Sigmoid colon (tissue), 7 donors: ENCODE measurements at regions of chr5 and their contacts with region 1.

Region 1: DNA sequence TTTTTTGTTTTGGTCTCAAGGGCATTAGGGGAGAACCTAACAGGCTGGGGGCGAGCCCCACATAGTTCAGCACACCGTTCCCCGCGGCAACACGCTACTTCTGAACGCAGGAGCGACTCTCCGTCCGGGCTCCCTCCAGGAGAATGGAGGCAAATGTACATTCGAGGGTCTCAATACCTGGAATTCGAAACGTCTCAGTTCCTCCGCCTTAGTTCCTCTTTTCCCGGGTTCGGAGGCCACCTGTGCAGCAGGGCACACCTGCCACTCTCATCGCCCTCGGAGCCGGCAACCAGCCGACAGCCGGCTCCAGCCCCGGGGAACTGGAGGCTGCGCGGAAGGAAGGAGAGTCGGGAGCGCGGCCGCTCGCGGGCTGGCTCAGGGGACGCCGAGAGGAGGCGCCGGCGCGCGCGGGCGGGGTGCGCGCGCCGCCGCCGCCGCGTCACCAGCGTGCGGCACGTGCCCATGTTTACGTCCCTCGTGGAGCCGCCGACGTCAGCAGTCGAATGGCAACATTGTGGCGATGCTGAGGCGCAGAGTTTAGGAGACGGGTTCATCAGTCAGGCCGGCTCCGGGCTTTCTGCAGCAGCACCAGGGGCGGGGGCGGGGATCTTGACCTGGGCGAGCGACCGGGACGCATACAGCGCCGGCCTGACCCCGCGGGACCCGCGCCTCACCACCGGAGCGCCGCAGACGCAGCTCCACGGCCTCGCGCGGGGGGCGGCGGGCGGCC is at the start of gene JMY:
- DNase-seq: peak; percentile 94
- H3K4me3 ChIP-seq: peak within 1 kb of the TSS; percentile 65 to 85 (median 74)
- H3K27ac ChIP-seq: peak within 1 kb of the TSS; percentile 85 to 96 (median 93)
- H3K4me1 ChIP-seq: peaks cover 0 to 37% (median 20%) of the 10 kb centered on the region in 4 donors
- H3K27me3 ChIP-seq: no peaks in the 10 kb centered on the region
- CTCF ChIP-seq: no peak
- EP300 ChIP-seq: peak in 2 of 4 donors; percentile 6 to 32
- POLR2A ChIP-seq: peak; percentile 21 to 42
- total RNA-seq, gene JMY: 33.2 to 58.7 (median 39.2) TPM

Region 2: DNA sequence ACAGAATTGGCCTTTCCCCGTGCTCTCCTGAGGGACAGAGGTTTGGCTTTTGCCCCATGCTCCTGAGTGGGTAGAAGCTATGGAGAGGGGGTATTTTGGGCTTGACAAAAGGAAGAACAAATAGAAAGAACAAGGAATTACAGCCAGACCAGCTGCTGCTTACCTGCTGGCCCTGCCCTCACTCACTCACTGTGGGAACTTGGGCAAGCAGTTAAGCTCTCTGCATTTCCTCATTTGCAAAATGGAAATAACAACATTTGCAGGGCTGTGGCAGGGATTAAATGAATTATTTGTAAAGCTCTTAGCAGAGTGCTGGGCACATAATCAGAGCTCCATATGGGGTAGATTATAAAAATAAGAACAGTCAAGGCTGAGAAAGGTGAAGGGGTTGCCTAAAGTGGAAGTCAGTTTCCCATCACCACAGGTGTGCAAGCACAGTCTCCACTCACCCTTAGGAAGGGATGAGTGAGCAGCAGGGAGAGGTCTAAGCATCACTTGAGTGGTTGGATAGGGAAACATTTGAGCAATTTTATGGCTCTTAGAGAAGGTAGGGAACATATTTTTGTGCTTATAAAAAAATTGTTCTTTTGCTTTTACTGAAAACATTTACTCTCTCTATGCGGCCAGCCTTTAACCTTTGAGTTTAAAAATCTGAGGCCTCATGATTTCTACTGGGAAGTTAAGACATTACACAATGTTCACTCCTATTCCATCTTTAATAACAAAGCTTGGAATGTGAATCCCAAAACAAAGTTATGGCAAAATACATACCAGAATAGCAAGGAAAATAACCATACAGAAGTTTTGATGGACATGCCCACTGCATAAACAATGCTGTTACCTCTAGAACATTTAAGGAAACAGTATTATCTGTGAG is 544.5 kb before region 1 on chr5:
- intact Hi-C with region 1: no loop called
- DNase-seq: no peak
- H3K4me3 ChIP-seq: no peak overlapping the region
- H3K27ac ChIP-seq: no peak overlapping the region
- H3K4me1 ChIP-seq: no peaks in the 10 kb centered on the region
- H3K27me3 ChIP-seq: no peaks in the 10 kb centered on the region
- CTCF ChIP-seq: no peak
- EP300 ChIP-seq: no peak
- POLR2A ChIP-seq: no peak

Region 3: GRCh38 chr5:79020861-79021561 is 214.8 kb before region 1 on chr5:
- intact Hi-C with region 1: loop called (anchors 5 kb)
- DNase-seq: peak; percentile 78
- H3K4me3 ChIP-seq: peak overlapping the region in 1 of 4 donors; percentile 5
- H3K27ac ChIP-seq: peak overlapping the region in 3 of 4 donors; percentile 43 to 78 (median 58)
- H3K4me1 ChIP-seq: peaks cover 0 to 41% (median 23%) of the 10 kb centered on the region in 4 donors
- H3K27me3 ChIP-seq: no peaks in the 10 kb centered on the region
- CTCF ChIP-seq: peak; percentile 35 to 82 (median 58)
- EP300 ChIP-seq: no peak
- POLR2A ChIP-seq: no peak

Region 4: DNA sequence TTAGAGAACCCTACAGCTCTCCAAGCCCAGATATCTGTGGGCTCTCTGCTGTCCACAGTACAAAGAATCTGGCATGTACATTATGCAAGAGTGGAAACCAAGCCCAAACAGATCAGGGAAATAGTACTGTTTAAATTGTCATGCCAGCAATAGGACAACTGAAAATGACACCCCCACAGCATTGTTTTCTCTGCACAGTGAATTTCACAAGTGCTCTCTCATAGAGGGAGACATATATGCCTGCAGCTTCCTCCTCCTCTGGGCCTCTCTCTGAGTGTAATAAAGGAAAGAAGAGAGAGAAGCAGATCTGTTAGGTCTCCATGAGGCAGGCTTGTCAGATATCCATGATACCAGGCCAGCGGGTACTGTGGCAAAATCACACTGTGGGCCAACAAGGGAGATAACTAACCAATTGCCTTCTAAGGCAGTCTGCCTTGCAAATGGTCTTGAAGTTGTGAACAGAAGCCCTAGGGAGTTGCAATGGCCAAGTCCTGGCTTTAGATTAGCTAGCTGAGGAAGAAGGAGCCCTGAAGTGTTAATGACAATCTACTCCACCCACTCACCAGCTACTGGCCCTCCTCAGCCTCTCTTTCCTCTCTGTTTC is 54.3 kb before region 1 on chr5:
- intact Hi-C with region 1: loop called (anchors 5 kb)
- DNase-seq: no peak
- H3K4me3 ChIP-seq: no peak overlapping the region
- H3K27ac ChIP-seq: peak overlapping the region; percentile 22 to 69 (median 56)
- H3K4me1 ChIP-seq: peaks cover 0 to 40% (median 31%) of the 10 kb centered on the region in 4 donors
- H3K27me3 ChIP-seq: no peaks in the 10 kb centered on the region
- CTCF ChIP-seq: no peak
- EP300 ChIP-seq: no peak
- POLR2A ChIP-seq: no peak

Region 5: GRCh38 chr5:79263290-79263689 is 27.5 kb after region 1 on chr5:
- intact Hi-C with region 1: no loop called
- DNase-seq: no peak
- H3K4me3 ChIP-seq: no peak overlapping the region
- H3K27ac ChIP-seq: no peak overlapping the region
- H3K4me1 ChIP-seq: peaks cover 0 to 16% (median 13%) of the 10 kb centered on the region in 4 donors
- H3K27me3 ChIP-seq: no peaks in the 10 kb centered on the region
- CTCF ChIP-seq: no peak
- EP300 ChIP-seq: no peak
- POLR2A ChIP-seq: no peak

Region 6: GRCh38 chr5:79464695-79465332 is 229.0 kb after region 1 on chr5:
- intact Hi-C with region 1: loop called (anchors 5 kb)
- DNase-seq: no peak
- H3K4me3 ChIP-seq: no peak overlapping the region
- H3K27ac ChIP-seq: no peak overlapping the region
- H3K4me1 ChIP-seq: no peaks in the 10 kb centered on the region
- H3K27me3 ChIP-seq: no peaks in the 10 kb centered on the region
- CTCF ChIP-seq: peak; percentile 42 to 54 (median 49)
- EP300 ChIP-seq: no peak
- POLR2A ChIP-seq: no peak